Mammary epithelial cell (primary cell): ENCODE measurements at regions of chr2 and their contacts with region 1.

Region 1: GRCh38 chr2:127945281-127945680 is 59.5 kb upstream of the AMMECR1L start:
- DNase-seq: no peak
- H3K4me3 ChIP-seq: no peak overlapping the region
- H3K27ac ChIP-seq: no peak overlapping the region
- H3K4me1 ChIP-seq: no peaks in the 10 kb centered on the region
- H3K27me3 ChIP-seq: no peaks in the 10 kb centered on the region
- CTCF ChIP-seq: no peak

Region 2: DNA sequence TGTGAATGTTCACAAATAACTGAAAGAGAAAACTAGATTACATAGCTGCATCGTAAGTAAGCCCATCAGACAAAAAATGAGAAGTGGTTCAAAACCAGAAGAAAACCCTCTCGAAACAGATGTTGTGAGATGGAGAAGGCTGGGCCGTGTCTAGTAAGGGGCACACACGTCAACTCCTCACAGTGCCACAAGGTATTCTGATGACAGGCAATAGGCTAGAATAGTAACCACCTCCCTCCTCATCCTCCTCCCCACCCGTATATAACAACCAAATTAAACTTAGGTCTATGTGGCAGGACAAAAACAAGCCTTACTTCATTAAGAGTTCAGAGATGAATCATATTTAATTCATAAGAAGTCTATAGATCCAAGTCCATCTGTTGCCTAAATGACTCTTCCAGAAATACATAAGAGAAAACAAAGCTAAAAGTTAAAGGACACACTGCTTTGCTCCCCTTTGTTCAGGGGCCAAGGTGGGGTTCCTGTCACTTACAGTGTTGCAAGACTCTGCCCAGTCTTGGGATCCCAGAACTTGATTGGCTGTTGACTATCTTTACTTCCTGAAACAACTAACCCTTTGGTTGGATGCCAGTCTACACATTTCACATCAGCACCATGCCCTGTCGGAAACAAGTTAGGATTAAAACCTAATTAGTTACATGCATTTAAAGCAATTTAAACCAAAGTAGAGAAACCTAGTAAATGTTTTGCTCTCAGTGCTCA is 219.0 kb before region 1 on chr2:
- CTCF ChIA-PET with region 1: no interaction called
- dilution Hi-C with region 1: no loop called
- in situ Hi-C with region 1: no loop called
- intact Hi-C with region 1: no loop called
- DNase-seq: no peak
- H3K4me3 ChIP-seq: no peak overlapping the region
- H3K27ac ChIP-seq: no peak overlapping the region
- H3K4me1 ChIP-seq: peaks cover 17% of the 10 kb centered on the region
- H3K27me3 ChIP-seq: no peaks in the 10 kb centered on the region
- CTCF ChIP-seq: no peak

Region 3: DNA sequence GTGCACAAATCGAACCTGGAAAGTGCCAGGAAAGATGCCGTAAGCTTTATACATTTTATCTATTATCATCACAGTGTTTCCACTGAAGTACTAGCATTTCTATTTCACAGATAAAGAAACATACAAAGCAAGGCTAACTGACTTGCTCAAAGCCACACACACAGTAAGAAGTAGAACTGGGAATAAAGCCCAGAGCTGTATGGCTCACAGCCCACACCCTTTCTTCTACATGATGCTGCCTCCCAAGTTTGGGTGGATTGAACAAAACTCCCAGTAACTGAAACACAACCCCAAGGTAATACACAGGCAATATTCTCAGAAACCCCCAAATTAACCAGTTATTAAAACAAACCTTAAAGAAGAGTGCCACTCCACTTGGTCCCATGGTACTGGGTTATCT is 71.3 kb after region 1 on chr2:
- CTCF ChIA-PET with region 1: no interaction called
- dilution Hi-C with region 1: loop called (anchors 5 kb)
- in situ Hi-C with region 1: no loop called
- intact Hi-C with region 1: no loop called
- DNase-seq: no peak
- H3K4me3 ChIP-seq: no peak overlapping the region
- H3K27ac ChIP-seq: no peak overlapping the region
- H3K4me1 ChIP-seq: no peaks in the 10 kb centered on the region
- H3K27me3 ChIP-seq: no peaks in the 10 kb centered on the region
- CTCF ChIP-seq: no peak

Region 4: DNA sequence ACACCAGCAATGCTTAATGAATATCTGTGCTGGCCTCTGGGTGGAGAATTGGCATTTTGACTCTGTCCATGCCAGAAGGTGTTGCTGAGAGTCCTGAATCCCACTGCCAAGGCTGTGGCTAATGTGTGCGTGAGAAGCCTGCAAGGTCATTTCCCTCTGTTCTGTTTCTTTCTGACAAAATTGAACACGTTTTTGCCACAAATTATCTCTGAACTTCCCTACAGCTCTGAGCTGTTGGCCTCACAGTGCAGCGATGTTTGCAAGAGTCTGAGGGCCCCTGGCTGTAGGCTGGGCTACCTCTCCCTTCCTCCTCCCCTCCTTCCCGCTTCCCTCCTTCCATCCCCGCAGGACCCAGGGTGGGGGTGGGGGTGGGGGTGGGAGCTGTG is 527.5 kb after region 1 on chr2:
- CTCF ChIA-PET with region 1: no interaction called
- dilution Hi-C with region 1: no loop called
- in situ Hi-C with region 1: no loop called
- intact Hi-C with region 1: no loop called
- DNase-seq: no peak
- H3K4me3 ChIP-seq: no peak overlapping the region
- H3K27ac ChIP-seq: no peak overlapping the region
- H3K4me1 ChIP-seq: no peaks in the 10 kb centered on the region
- H3K27me3 ChIP-seq: peaks cover 3% of the 10 kb centered on the region
- CTCF ChIP-seq: no peak